Activated naive CD4-positive, alpha-beta T cell treated with anti-CD3 and anti-CD28 coated beads for 36 hours (primary cell): ENCODE measurements at regions of chr9 and their contacts with region 1.

Region 1: GRCh38 chr9:34989003-34989945 is at the start of gene DNAJB5:
- DNase-seq: peak; percentile 99
- H3K4me3 Mint-ChIP-seq: peak within 1 kb of the TSS; percentile 90
- H3K27ac Mint-ChIP-seq: peak within 1 kb of the TSS; percentile 92
- H3K4me1 Mint-ChIP-seq: peaks cover 85% of the 10 kb centered on the region
- H3K27me3 Mint-ChIP-seq: no peaks in the 10 kb centered on the region
- total RNA-seq, gene DNAJB5: 11.4 to 12.0 TPM

Region 2: GRCh38 chr9:34646211-34647083 is 342.8 kb before region 1 on chr9 and contains the start of gene GALT:
- CTCF ChIA-PET with region 1: no interaction called
- intact Hi-C with region 1: loop called (anchors 5 kb)
- DNase-seq: peak; percentile 98
- H3K4me3 Mint-ChIP-seq: peak within 1 kb of the TSS; percentile 86
- H3K27ac Mint-ChIP-seq: peak within 1 kb of the TSS; percentile 83
- H3K4me1 Mint-ChIP-seq: peaks cover 18% of the 10 kb centered on the region
- H3K27me3 Mint-ChIP-seq: no peaks in the 10 kb centered on the region
- total RNA-seq, gene GALT: 42.0 to 44.6 TPM

Region 3: GRCh38 chr9:34899535-34900158 is 89.6 kb before region 1 on chr9:
- CTCF ChIA-PET with region 1: interaction called, 44 read pairs
- intact Hi-C with region 1: loop called (anchors 1 kb)
- DNase-seq: peak; percentile 91
- H3K4me3 Mint-ChIP-seq: no peak overlapping the region
- H3K27ac Mint-ChIP-seq: no peak overlapping the region
- H3K4me1 Mint-ChIP-seq: no peaks in the 10 kb centered on the region
- H3K27me3 Mint-ChIP-seq: peaks cover 22% of the 10 kb centered on the region

Region 4: DNA sequence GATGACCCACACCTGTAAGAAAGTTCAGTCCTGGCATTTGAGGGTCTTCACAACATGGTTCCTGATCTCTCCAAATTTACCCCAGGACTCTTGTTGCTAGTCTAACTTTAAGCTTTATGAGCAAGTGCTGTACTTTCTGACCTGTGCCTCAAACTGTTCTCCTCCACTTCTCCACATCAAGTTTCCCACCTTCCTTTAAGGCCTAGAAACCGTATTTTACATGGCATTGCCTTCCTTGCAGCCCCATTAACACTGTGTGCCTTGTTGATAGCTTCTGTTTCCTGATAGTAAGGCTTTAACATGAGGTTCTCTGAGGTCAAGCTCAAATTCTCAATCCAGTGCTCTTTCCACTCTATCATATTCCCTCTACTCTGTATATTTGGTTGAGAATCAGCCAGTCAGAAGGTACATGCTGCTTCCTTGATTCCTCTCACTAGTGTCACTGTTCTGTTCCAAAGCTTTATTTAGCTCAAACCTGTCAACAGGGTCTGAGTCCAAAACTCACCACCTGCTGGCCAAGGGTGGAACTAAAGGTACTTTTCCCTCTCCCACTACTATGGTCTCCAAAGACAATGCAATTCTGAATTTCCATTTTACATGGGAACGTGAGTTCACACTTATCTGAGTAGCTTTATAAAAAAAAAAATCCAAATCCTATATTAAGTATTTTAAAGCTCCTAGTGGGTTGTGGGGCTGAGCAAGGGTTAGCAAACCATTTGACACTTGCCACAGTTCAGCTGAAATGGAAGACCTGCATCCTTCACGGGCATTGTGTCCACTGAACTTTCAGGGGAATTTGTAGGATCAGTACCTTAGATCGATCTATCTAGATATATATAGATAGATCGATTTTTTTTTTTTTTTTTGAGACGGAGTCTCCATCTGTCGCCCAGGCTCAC is 62.0 kb after region 1 on chr9:
- CTCF ChIA-PET with region 1: interaction called, 14 read pairs
- intact Hi-C with region 1: loop called (anchors 5 kb)
- DNase-seq: peak; percentile 71
- H3K4me3 Mint-ChIP-seq: no peak overlapping the region
- H3K27ac Mint-ChIP-seq: no peak overlapping the region
- H3K4me1 Mint-ChIP-seq: no peaks in the 10 kb centered on the region
- H3K27me3 Mint-ChIP-seq: no peaks in the 10 kb centered on the region

Region 5: DNA sequence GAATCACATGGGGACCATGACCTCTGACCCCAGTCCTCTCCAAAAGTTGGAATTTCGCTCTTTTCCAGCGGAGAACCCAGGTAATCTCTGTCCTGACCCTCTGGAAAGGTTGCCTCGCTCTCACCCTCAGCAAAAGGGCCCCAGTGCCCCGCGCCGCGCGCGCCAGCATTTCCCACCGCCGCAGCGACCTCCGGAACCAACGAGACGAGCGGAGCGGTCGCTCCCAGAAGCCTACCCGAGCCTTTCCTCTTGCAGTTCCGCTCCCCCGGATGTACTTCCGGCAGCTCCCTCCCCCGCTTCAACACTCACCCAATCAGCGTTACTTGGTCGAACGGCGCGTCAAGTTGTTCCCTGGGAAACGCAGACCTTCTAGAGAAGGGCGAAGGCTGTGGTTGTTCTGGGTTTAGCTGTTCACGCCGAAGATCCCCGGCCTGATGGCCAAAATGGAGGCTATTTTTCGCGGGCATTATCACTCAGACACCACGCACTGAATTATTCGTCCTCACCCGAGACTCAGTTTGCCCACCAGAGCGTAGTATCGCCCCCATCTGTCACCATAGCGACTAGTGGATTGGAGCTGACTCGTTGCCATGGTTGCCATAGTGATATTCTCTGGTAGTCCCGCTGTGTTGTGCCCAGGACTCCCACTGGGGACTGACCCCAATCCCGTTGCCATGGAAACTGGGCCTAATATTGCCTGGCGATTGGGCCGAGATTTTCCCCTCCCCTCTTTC is 113.8 kb after region 1 on chr9 and contains the start of gene STOML2:
- CTCF ChIA-PET with region 1: no interaction called
- intact Hi-C with region 1: loop called (anchors 1 kb)
- DNase-seq: peak; percentile 96
- H3K4me3 Mint-ChIP-seq: peak within 1 kb of the TSS; percentile 99
- H3K27ac Mint-ChIP-seq: peak within 1 kb of the TSS; percentile 93
- H3K4me1 Mint-ChIP-seq: peaks cover 31% of the 10 kb centered on the region
- H3K27me3 Mint-ChIP-seq: no peaks in the 10 kb centered on the region
- total RNA-seq, gene STOML2: 165 to 168 TPM

Region 6: GRCh38 chr9:35277628-35278359 is 288.5 kb after region 1 on chr9:
- CTCF ChIA-PET with region 1: no interaction called
- intact Hi-C with region 1: loop called (anchors 10 kb)
- DNase-seq: no peak
- H3K4me3 Mint-ChIP-seq: no peak overlapping the region
- H3K27ac Mint-ChIP-seq: no peak overlapping the region
- H3K4me1 Mint-ChIP-seq: peaks cover 30% of the 10 kb centered on the region
- H3K27me3 Mint-ChIP-seq: peaks cover 3% of the 10 kb centered on the region

Region 7: DNA sequence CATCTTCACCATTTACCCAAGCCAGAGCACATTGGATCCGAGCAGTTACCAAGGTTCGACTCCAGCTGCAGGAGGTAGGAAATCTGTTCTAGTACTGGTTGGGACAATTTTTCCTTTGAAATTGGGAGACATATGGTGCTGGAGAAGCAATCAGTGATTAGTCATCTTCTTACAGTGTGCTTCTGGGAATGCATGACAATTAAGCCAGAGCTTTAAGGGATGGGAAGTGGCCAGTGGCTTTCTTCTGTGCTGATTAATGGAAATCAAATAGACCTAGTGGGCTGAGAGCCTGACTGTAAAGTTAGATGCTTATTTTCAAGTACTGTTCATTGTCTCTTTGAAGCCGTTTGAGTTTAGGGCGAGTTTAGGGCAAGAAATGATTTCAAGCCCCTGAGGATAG is 324.6 kb after region 1 on chr9:
- CTCF ChIA-PET with region 1: no interaction called
- intact Hi-C with region 1: no loop called
- DNase-seq: no peak
- H3K4me3 Mint-ChIP-seq: no peak overlapping the region
- H3K27ac Mint-ChIP-seq: no peak overlapping the region
- H3K4me1 Mint-ChIP-seq: no peaks in the 10 kb centered on the region
- H3K27me3 Mint-ChIP-seq: no peaks in the 10 kb centered on the region